CD4-positive, alpha-beta T cell (primary cell): ENCODE measurements at regions of chr2 and their contacts with region 1.

Region 1: DNA sequence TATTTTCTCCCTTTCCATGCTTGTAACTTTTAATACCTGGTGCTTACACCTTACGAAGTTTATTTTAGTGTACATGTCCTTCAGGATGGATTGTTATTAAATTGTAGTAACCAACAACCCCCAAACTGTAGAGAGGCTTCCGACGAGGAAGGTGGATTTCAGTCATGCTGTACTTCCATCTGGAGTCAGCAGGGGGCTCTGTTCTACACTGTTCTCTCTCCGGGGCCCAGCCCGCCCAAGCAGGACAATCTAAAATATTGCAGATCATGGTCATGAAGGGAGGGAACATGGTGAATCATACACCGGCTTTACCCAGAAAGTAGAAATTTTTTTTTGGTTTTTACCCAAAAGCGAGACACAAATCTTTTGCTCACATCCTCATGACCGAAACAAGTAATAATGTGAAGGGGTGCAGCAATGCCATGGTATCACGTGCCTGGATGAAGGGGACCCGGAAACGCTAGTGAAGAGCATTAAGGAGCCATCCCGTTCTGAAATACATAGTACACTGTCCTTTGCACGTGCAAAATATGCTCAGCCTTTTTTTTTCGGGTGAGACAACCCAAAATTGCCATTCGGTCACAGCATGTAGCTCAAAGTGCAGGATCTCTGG is 884.8 kb downstream of the EPHA4 start:
- DNase-seq: peak; percentile 28 to 73 (median 50)
- ATAC-seq: peak; percentile 89
- H3K4me3 ChIP-seq: no peak overlapping the region
- H3K4me3 Mint-ChIP-seq: no peak overlapping the region
- H3K27ac ChIP-seq: no peak overlapping the region
- H3K27ac Mint-ChIP-seq: no peak overlapping the region
- H3K4me1 ChIP-seq: no peaks in the 10 kb centered on the region
- H3K4me1 Mint-ChIP-seq: no peaks in the 10 kb centered on the region
- H3K27me3 ChIP-seq: no peaks in the 10 kb centered on the region
- H3K27me3 Mint-ChIP-seq: peaks cover 36% of the 10 kb centered on the region
- CTCF ChIP-seq: peak; percentile 89

Region 2: GRCh38 chr2:220064111-220065030 is 623.0 kb before region 1 on chr2:
- CTCF ChIA-PET with region 1: no interaction called
- POLR2A ChIA-PET with region 1: no interaction called
- intact Hi-C with region 1: no loop called
- DNase-seq: no peak
- ATAC-seq: no peak
- H3K4me3 ChIP-seq: no peak overlapping the region
- H3K4me3 Mint-ChIP-seq: no peak overlapping the region
- H3K27ac ChIP-seq: no peak overlapping the region
- H3K27ac Mint-ChIP-seq: no peak overlapping the region
- H3K4me1 ChIP-seq: no peaks in the 10 kb centered on the region
- H3K4me1 Mint-ChIP-seq: no peaks in the 10 kb centered on the region
- H3K27me3 ChIP-seq: peaks cover 3 to 4% of the 10 kb centered on the region in 2 experiments
- H3K27me3 Mint-ChIP-seq: no peaks in the 10 kb centered on the region
- CTCF ChIP-seq: no peak

Region 3: GRCh38 chr2:221969087-221969829 is 1281.9 kb after region 1 on chr2:
- CTCF ChIA-PET with region 1: no interaction called
- POLR2A ChIA-PET with region 1: no interaction called
- intact Hi-C with region 1: loop called (anchors 2 to 5 kb)
- DNase-seq: peak in 3 of 14 experiments; percentile 18 to 25 (median 19)
- ATAC-seq: no peak
- H3K4me3 ChIP-seq: no peak overlapping the region
- H3K4me3 Mint-ChIP-seq: no peak overlapping the region
- H3K27ac ChIP-seq: no peak overlapping the region
- H3K27ac Mint-ChIP-seq: no peak overlapping the region
- H3K4me1 ChIP-seq: no peaks in the 10 kb centered on the region
- H3K4me1 Mint-ChIP-seq: no peaks in the 10 kb centered on the region
- H3K27me3 ChIP-seq: no peaks in the 10 kb centered on the region
- H3K27me3 Mint-ChIP-seq: peaks cover 17% of the 10 kb centered on the region
- CTCF ChIP-seq: peak; percentile 43